ENCODE measurements at regions of chr5 and their contacts with region 1.

Region 1: GRCh38 chr5:140388052-140388451 is 13.6 kb upstream of the ANKHD1 start:
- DNase-seq: no peak
- ATAC-seq: no peak
- H3K4me3 ChIP-seq: no peak overlapping the region
- H3K27ac ChIP-seq: no peak overlapping the region
- H3K4me1 ChIP-seq: peaks cover 0 to 6% (median 0%) of the 10 kb centered on the region in 12 donors
- H3K27me3 ChIP-seq: no peaks in the 10 kb centered on the region
- CTCF ChIP-seq: no peak
- POLR2A ChIP-seq: no peak

Region 2: DNA sequence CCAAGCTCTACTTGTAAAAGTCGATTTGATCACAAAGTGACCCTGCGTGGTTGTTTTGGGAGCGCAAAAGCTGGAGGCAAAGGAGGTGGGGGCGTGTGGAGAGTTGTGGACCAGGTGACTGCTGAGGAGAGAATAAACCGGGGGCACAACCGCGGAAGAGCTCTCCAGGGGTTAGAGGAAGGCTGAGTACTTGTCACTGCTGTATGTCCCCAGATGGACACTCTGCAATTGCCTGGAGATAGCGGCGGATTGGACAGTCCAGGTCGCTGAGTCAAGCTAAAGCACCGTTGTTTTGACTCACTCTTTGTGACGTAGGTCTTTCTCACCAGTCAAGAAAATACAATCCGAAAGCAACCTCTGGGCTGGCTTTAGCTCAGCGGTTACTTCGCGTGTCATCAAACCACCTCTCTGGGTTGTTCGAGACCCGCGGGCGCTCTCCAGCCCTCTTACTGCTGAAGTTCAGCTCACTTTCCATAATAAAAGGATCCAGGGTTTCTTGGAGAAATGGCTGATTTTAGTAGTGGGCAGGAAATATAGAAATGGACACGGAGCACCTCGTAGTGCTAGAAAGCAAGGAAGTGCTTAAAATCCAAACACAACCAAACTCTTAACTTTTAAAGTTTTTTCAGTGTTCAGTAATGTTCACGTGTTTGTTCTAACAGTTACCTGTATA is 337.9 kb after region 1 on chr5:
- intact Hi-C with region 1: loop called in 1 of 10 experiments (anchors 5 kb)
- DNase-seq: peak in 3 of 5 donors; percentile 17 to 57 (median 48)
- ATAC-seq: peak in 3 of 4 donors; percentile 81 to 89 (median 89)
- H3K4me3 ChIP-seq: peak overlapping the region in 6 of 12 donors; percentile 5 to 32 (median 16)
- H3K27ac ChIP-seq: no peak overlapping the region
- H3K4me1 ChIP-seq: peaks cover 0 to 5% (median 0%) of the 10 kb centered on the region in 12 donors
- H3K27me3 ChIP-seq: peaks cover 0 to 22% (median 0%) of the 10 kb centered on the region in 9 donors
- CTCF ChIP-seq: no peak
- POLR2A ChIP-seq: no peak

Measured in heart left ventricle (tissue), 16 donors.